PC-9 (cell line): ENCODE measurements at regions of chr11 and their contacts with region 1.

Region 1: GRCh38 chr11:86719781-86720463 is 47.5 kb upstream of the ME3 start:
- DNase-seq: peak; percentile 38 to 99
- H3K4me3 ChIP-seq: no peak overlapping the region
- H3K27ac ChIP-seq: peak overlapping the region; percentile 79
- H3K4me1 ChIP-seq: peaks cover 45% of the 10 kb centered on the region
- H3K27me3 ChIP-seq: no peaks in the 10 kb centered on the region
- CTCF ChIP-seq: no peak

Region 2: GRCh38 chr11:86608251-86608799 is 111.6 kb before region 1 on chr11:
- CTCF ChIA-PET with region 1: no interaction called
- POLR2A ChIA-PET with region 1: interaction called, 10 read pairs
- intact Hi-C with region 1: no loop called
- DNase-seq: peak; percentile 72 to 73
- H3K4me3 ChIP-seq: no peak overlapping the region
- H3K27ac ChIP-seq: no peak overlapping the region
- H3K4me1 ChIP-seq: peaks cover 22% of the 10 kb centered on the region
- H3K27me3 ChIP-seq: no peaks in the 10 kb centered on the region
- CTCF ChIP-seq: peak; percentile 96

Region 3: GRCh38 chr11:86632499-86633269 is 87.2 kb before region 1 on chr11:
- CTCF ChIA-PET with region 1: no interaction called
- POLR2A ChIA-PET with region 1: no interaction called
- intact Hi-C with region 1: no loop called
- DNase-seq: peak; percentile 83 to 96
- H3K4me3 ChIP-seq: no peak overlapping the region
- H3K27ac ChIP-seq: peak overlapping the region; percentile 74
- H3K4me1 ChIP-seq: peaks cover 19% of the 10 kb centered on the region
- H3K27me3 ChIP-seq: no peaks in the 10 kb centered on the region
- CTCF ChIP-seq: peak; percentile 52

Region 4: DNA sequence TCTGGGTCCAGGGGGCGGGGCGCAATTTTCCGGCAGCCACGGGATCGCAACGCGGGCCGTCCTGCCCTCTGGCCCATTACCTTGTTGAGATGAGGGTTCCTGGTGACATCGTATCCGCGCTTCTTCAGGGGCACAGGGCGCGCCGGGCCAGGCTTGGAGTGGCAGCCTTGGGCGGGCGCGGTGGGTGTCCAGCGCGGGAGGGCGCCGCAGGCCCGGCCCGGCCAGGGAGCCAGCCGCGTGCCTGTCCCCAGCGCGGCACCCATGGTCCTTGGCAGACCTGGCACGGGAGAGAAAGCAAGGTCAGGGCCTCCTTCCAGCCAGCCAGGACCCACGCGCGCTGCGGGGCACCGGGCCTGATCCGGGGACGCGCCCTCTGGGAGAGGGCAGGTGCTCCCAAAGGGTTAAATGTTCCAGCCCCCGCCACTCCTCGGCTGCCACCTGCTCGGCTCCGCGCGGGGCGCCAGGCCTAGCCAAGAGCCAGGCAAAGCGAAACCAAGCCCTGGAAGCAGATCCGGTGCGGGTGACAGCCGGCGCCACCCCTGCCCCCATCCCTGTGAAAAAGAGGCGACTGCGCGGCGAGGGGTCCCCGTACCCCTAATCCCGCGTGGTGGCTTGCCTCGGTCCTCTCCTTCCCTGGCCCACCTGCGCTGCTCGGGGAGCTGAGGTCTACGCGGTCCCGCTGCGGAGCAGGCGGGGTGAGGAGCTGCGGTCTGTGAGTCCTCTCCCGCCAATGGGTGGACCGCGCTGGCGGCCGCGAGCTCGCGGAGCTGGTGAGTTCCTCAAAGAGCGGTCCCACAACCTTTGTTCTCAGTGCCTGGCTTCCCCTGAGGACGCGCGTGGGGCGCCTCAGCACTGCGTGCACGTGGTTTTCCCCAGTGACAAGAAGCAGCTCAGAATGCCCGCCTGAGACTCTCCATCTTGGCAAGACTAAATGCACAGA is 48.0 kb before region 1 on chr11 and contains the start of gene ME3:
- CTCF ChIA-PET with region 1: no interaction called
- POLR2A ChIA-PET with region 1: no interaction called
- intact Hi-C with region 1: loop called (anchors 1 kb)
- DNase-seq: peak; percentile 63 to 74
- H3K4me3 ChIP-seq: peak within 1 kb of the TSS; percentile 82
- H3K27ac ChIP-seq: peak within 1 kb of the TSS; percentile 87
- H3K4me1 ChIP-seq: peaks cover 52% of the 10 kb centered on the region
- H3K27me3 ChIP-seq: no peaks in the 10 kb centered on the region
- CTCF ChIP-seq: no peak
- total RNA-seq, gene ME3: 34.0 and 61.1 TPM in 2 replicates

Region 5: GRCh38 chr11:86678296-86678695 is 41.6 kb before region 1 on chr11:
- CTCF ChIA-PET with region 1: no interaction called
- POLR2A ChIA-PET with region 1: interaction called, 12 read pairs
- intact Hi-C with region 1: no loop called
- DNase-seq: no peak
- H3K4me3 ChIP-seq: no peak overlapping the region
- H3K27ac ChIP-seq: no peak overlapping the region
- H3K4me1 ChIP-seq: peaks cover 23% of the 10 kb centered on the region
- H3K27me3 ChIP-seq: no peaks in the 10 kb centered on the region
- CTCF ChIP-seq: no peak